HCT116 (cell line): ENCODE measurements at regions of chr2 and their contacts with region 1.

Region 1: DNA sequence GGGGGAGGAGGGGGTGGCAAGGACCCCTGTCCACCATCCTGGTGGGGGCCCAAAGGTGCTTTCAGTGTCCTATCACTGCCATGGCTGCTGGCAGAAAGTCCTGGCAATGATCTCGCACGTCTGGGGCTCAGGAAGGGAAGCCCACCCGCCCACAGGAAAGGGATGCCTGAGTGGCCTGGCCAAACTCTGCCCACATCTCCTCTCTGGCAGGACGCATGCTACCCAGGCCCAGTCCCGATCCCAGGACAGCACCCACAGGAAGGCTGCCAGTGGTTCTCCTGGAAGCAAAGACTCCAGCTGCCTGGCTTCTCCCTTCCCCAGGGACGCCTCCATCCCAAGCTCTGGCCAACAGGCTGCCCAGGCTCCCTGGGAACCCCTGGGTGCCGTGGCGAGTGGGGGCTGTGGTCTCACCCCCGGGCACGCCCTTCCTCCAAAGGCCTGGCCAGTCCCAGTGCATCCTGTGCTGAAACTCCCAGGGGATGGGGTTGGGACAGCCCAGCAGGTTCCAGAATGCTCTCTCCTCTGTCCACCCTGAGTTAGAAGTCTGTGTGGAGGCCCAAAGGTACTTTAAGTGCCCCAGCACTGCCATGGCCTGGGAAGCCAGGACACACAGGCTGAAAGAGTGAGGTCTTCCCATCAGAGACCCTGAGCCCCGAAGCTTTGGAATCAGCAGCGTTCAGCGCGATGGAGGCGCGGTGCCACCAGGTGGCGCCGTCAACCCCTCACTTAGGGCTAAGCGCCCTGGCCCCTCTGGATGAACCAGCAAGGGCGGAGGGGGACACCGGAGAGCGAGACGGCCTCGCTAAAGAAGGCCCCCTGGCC is 29.8 kb upstream of the TAF1B start:
- DNase-seq: no peak
- ATAC-seq: peak; percentile 97
- H3K4me3 ChIP-seq: peak overlapping the region; percentile 11 to 16
- H3K27ac ChIP-seq: no peak overlapping the region
- H3K4me1 ChIP-seq: peaks cover 7 to 19% of the 10 kb centered on the region in 2 experiments; a peak in 3 of 4 replicates
- H3K27me3 ChIP-seq: no peaks in the 10 kb centered on the region
- CTCF ChIP-seq: peak; percentile 89 to 94 (median 93)
- POLR2A ChIP-seq: no peak
- RAD21 ChIP-seq: peak; percentile 98

Region 2: DNA sequence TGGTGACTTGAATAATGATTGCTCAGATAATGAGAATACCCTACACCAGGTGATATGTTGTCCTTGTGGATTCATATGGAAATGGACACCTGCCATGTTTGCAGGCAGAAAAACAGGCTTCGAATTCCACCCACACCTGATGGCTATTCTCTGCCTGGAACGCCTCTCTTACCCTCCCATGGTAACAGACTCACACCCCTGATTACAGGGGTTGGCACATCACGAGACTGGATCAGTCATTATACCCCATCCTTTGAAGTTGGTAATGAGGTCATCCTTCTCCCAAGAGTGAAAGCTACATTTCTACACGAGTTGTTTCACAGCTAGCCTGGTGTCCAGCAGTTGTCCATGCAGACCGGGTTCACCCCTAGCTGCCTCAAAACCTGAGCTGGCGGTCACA is 738.6 kb before region 1 on chr2:
- CTCF ChIA-PET with region 1: no interaction called
- POLR2A ChIA-PET with region 1: no interaction called
- RAD21 ChIA-PET with region 1: no interaction called
- intact Hi-C with region 1: no loop called
- DNase-seq: no peak
- ATAC-seq: no peak
- H3K4me3 ChIP-seq: no peak overlapping the region
- H3K27ac ChIP-seq: no peak overlapping the region
- H3K4me1 ChIP-seq: peaks cover 0 to 36% of the 10 kb centered on the region in 2 experiments; a peak in 3 of 4 replicates
- H3K27me3 ChIP-seq: no peaks in the 10 kb centered on the region
- CTCF ChIP-seq: no peak
- POLR2A ChIP-seq: no peak
- RAD21 ChIP-seq: no peak

Region 3: DNA sequence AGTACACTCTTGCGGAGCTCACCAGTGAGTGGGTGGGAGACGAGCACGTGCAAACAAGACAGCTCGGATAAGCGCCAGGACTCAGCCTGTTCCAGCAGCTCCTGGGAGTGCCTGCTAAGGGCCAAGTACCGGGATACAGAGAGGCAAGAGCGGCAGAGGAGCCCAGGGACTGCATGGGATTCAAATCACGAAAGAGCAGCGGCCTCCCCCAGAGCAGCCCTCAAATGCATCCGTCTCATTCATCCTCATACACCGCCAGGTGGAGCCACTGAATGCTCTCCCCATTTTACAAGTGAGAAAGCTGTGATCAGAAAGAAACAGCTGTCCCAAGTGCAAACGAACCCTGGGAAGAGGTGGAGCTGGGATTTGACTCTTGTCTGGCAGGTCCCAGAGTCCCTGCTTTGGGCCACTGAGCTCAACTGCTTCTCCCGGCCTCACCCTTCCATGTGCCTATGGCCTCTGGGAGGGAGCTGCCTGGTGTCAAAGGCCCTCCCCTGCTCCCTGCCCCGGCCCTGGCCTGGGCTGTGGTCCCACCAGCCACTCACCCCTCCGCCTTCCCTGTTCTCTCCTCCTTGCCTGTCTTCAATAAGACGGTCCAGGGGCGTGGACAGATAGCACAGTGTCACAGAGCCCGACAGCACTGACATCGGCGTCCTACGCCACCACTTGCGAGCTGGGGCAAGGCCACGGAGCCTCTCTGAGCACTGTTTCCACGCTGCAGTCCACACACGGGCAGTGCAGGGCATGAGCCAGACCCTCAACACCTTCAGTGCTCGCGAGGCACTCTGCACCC is 43.0 kb before region 1 on chr2:
- CTCF ChIA-PET with region 1: no interaction called
- POLR2A ChIA-PET with region 1: no interaction called
- RAD21 ChIA-PET with region 1: no interaction called
- intact Hi-C with region 1: no loop called
- DNase-seq: peak; percentile 42
- ATAC-seq: peak; percentile 87
- H3K4me3 ChIP-seq: no peak overlapping the region
- H3K27ac ChIP-seq: no peak overlapping the region; the same call in 1 of the 2 replicates
- H3K4me1 ChIP-seq: peaks cover 17 to 29% of the 10 kb centered on the region in 2 experiments; a peak in 3 of 4 replicates
- H3K27me3 ChIP-seq: no peaks in the 10 kb centered on the region
- CTCF ChIP-seq: peak; percentile 69 to 80 (median 73)
- POLR2A ChIP-seq: no peak
- RAD21 ChIP-seq: peak; percentile 74

Region 4: DNA sequence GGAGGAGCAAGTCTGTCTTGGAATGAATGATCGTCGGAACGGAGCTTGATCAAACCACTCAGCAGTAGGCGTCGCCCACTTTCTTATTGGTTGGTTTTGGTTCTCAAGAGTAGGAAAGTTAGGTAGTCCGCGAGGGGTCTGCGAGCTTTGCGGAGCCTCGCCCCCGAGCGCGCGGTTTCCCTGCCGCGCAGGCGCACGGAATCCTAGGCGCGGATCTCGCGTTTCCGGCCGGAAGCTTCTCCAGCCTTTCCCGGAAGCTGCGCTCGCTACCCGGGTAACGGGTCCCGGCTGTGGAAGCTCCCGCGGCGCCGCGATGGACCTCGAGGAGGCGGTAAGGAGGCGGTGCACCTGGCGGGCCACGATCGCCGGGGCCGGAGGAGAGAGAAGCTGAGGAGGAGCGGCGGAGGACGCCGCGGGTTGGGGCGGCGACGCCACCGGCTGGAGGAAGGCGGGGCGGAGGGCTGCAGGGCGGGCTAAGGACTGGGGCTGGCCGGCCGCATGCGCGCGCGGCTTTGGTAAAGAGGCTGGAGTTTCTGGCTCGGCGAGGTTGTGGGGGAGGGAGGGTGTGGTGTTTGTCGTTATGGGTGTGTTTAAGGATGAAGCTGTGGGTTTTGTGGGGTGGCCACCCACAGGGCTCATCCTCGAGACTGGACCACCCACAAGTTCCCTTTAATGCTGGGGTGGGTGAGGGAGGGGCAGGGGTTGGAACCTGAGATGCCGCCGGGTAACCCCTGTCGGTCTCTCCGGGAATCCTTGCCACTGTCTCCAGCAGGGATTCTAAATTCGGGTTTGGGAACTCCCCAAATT is 29.9 kb after region 1 on chr2 and contains the start of gene TAF1B:
- CTCF ChIA-PET with region 1: no interaction called
- POLR2A ChIA-PET with region 1: interaction called, 4 read pairs
- RAD21 ChIA-PET with region 1: no interaction called
- intact Hi-C with region 1: loop called (anchors 1 kb)
- DNase-seq: peak; percentile 91
- ATAC-seq: peak; percentile 89
- H3K4me3 ChIP-seq: peak within 1 kb of the TSS; percentile 83 to 86
- H3K27ac ChIP-seq: peak within 1 kb of the TSS; percentile 88
- H3K4me1 ChIP-seq: peaks cover 3 to 20% of the 10 kb centered on the region in 2 experiments; a peak in 3 of 4 replicates
- H3K27me3 ChIP-seq: no peaks in the 10 kb centered on the region
- CTCF ChIP-seq: peak in 2 of 3 experiments; percentile 22 to 46; a peak in 3 of 6 replicates
- POLR2A ChIP-seq: peak; percentile 86
- RAD21 ChIP-seq: peak; percentile 17
- total RNA-seq, gene TAF1B: 27.9 TPM

Region 5: DNA sequence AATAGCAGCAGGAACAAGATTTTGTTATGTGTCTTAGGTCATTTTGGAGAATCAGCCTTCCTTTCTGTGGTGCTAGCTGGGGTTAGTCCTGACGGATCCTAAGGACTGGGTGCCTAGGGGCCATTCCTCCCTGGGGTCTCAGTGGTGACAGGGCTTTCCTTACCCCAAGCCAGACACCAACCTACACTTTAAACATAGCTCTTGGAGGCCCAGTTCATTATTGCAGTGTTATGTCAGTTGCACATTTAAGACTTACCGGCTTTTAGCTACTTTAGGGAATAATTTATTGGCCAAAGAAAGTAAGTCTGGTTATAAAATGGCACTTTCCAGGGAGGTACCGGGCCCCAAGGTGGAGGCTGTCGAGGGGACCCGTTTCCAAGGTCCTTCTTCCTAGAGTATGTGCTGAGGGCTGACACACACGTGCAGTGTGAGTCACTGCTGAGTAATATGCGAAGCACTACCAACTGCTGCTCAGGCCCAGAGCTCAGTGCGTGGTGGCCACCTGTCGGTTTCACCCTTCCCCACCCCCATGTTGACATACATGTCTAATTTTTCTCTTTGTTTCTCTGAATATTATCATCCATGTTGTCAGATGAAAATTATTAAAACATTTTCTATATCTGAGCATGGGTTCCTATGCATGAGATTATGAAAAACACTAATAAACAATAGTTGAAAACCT is 101.0 kb after region 1 on chr2:
- CTCF ChIA-PET with region 1: interaction called, 3 read pairs
- POLR2A ChIA-PET with region 1: no interaction called
- RAD21 ChIA-PET with region 1: no interaction called
- intact Hi-C with region 1: loop called (anchors 1 kb)
- DNase-seq: peak; percentile 76
- ATAC-seq: peak; percentile 100
- H3K4me3 ChIP-seq: no peak overlapping the region
- H3K27ac ChIP-seq: no peak overlapping the region
- H3K4me1 ChIP-seq: peaks cover 10 to 18% of the 10 kb centered on the region in 2 experiments
- H3K27me3 ChIP-seq: no peaks in the 10 kb centered on the region
- CTCF ChIP-seq: peak; percentile 43 to 72 (median 49); a peak in 4 of 6 replicates
- POLR2A ChIP-seq: no peak
- RAD21 ChIP-seq: peak; percentile 94

Region 6: GRCh38 chr2:10538224-10538894 is 724.8 kb after region 1 on chr2:
- CTCF ChIA-PET with region 1: no interaction called
- POLR2A ChIA-PET with region 1: no interaction called
- RAD21 ChIA-PET with region 1: no interaction called
- intact Hi-C with region 1: no loop called
- DNase-seq: peak; percentile 63
- ATAC-seq: peak; percentile 81
- H3K4me3 ChIP-seq: no peak overlapping the region
- H3K27ac ChIP-seq: no peak overlapping the region
- H3K4me1 ChIP-seq: peaks cover 0 to 36% of the 10 kb centered on the region in 2 experiments; a peak in 2 of 4 replicates
- H3K27me3 ChIP-seq: no peaks in the 10 kb centered on the region
- CTCF ChIP-seq: no peak
- POLR2A ChIP-seq: no peak
- RAD21 ChIP-seq: no peak